ENCODE measurements at regions of chr6 and their contacts with region 1.

Region 1: GRCh38 chr6:99241905-99242534 is 107.5 kb downstream of the FAXC start:
- DNase-seq: peak in 1 of 2 experiments; percentile 61
- H3K4me3 ChIP-seq: no peak overlapping the region
- H3K27ac ChIP-seq: no peak overlapping the region
- H3K4me1 ChIP-seq: no peaks in the 10 kb centered on the region
- H3K27me3 ChIP-seq: no peaks in the 10 kb centered on the region
- CTCF ChIP-seq: peak in 2 of 3 experiments; percentile 56 to 69; a peak in 2 of 4 replicates
- EP300 ChIP-seq: no peak
- POLR2A ChIP-seq: no peak
- RAD21 ChIP-seq: peak; percentile 83 to 86

Region 2: DNA sequence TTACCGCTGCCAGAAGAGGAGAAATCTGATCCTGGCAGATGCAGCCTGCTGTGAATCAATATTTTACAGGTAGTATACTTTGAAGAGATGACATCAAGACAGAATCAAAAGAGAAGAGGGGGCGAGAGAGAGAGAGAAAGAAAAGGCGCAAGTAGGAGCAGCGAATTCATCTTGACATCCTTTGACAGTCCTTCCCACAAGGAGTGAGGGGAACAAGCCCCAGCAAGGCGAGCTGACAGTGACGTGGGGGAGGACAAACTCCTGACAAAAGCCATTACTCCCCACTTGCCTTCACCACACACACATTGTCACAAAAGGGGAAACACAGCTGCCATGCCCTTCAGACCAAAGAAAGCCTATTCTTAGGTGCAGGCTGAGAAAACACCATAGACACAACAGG is 148.2 kb before region 1 on chr6:
- CTCF ChIA-PET with region 1: interaction called, 10 read pairs
- POLR2A ChIA-PET with region 1: no interaction called
- DNase-seq: no peak
- H3K4me3 ChIP-seq: no peak overlapping the region
- H3K27ac ChIP-seq: no peak overlapping the region
- H3K4me1 ChIP-seq: no peaks in the 10 kb centered on the region
- H3K27me3 ChIP-seq: no peaks in the 10 kb centered on the region
- CTCF ChIP-seq: no peak
- EP300 ChIP-seq: no peak
- POLR2A ChIP-seq: no peak
- RAD21 ChIP-seq: no peak

Region 3: DNA sequence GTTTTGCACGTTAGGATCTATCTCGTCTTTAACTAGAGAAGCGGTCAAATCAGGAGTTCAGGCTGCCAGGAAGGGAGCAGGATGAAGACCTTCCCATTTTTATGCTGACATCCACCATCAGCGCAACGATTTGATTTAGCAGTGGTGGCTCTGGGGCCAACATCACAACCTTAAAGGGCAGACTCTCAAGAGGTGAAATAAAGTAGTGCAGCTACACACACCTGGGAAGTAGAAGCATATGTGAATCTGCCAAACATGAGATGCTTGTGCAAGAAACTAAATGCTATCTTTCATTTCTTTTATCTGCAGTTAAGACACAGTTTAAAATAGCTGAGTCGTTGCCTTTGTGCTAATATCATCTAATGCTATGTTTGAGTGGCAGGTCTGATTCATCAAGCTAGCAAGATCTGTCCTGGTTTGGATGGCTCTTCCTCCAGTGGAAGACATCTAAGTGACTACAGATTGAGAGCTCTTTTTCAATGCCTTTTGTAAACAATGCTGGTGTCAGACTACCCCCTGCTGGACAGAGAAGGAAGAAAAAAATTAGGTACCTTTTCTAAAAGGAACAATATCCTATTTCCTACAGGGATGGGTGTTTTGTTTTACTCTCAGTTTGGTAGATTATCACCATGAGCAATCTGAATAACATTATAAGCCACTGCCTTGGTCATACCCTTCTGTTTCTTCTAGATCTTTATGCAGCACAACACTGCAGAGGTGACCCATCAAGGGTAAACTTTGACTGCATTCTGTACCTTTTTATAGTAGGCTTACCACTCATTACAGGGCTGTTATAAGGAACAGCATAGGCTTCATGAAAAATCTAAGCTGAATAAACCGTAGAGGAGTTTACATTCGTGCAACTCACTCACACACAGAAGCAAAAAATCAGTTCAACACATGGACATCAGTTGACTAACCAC is 122.7 kb before region 1 on chr6:
- CTCF ChIA-PET with region 1: interaction called, 17 read pairs
- POLR2A ChIA-PET with region 1: no interaction called
- DNase-seq: no peak
- H3K4me3 ChIP-seq: no peak overlapping the region
- H3K27ac ChIP-seq: no peak overlapping the region
- H3K4me1 ChIP-seq: no peaks in the 10 kb centered on the region
- H3K27me3 ChIP-seq: no peaks in the 10 kb centered on the region
- CTCF ChIP-seq: peak in 2 of 3 experiments; percentile 59 to 61; a peak in 2 of 4 replicates
- EP300 ChIP-seq: no peak
- POLR2A ChIP-seq: no peak
- RAD21 ChIP-seq: peak; percentile 89 to 91

Region 4: GRCh38 chr6:99151634-99152344 is 90.2 kb before region 1 on chr6:
- CTCF ChIA-PET with region 1: interaction called, 167 read pairs
- POLR2A ChIA-PET with region 1: interaction called, 5 read pairs
- DNase-seq: peak; percentile 33 to 89
- H3K4me3 ChIP-seq: no peak overlapping the region
- H3K27ac ChIP-seq: no peak overlapping the region
- H3K4me1 ChIP-seq: peaks cover 0 to 6% (median 0%) of the 10 kb centered on the region in 4 experiments; a peak in 1 of 7 replicates
- H3K27me3 ChIP-seq: no peaks in the 10 kb centered on the region
- CTCF ChIP-seq: peak; percentile 72 to 92 (median 82)
- EP300 ChIP-seq: no peak
- POLR2A ChIP-seq: no peak
- RAD21 ChIP-seq: peak; percentile 65 to 71

Region 5: DNA sequence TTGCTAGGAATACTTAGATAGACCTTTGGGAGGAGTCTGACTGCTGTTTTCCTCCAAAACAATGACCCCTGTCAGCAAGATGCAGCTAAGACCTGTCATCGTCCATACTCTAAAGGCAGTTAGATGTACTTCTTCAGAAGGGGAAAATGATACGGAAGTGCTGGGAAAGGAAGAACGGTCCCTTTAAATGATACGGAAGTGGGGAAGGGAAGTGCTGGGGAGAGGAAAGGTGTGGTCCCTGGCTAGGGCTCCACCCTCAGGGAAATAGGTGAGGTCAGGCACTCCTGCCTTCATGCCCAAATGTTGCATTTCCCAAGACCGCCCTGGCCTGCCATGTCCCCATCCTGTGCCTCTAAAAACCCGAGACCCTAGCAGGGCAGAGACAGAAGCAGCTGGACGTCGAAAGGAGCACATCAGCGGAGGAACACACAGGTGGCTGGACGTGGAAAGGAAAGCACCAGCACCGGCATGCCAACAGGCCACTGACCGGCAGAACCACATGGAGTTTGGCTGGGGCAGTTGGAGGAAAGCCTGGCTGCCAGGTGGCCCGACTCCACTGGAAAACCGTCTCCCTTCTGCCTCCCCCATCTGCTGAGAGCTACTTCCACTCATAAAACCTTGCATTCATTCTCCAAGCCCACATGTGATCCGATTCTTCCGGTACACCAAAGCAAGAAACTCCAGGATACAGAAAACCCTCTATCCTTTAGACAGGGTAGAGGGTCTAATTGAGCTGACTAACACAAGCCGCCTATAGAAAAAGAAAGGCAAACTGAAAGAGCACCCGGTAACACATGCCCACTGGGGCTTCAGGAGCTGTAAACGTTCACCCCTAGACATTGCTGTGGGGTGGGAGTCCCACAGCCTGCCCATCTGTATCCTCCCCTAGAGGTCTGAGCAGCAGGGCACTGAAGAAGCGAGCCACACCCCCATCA is 12.9 kb after region 1 on chr6:
- CTCF ChIA-PET with region 1: interaction called, 18 read pairs
- POLR2A ChIA-PET with region 1: no interaction called
- DNase-seq: no peak
- H3K4me3 ChIP-seq: no peak overlapping the region
- H3K27ac ChIP-seq: no peak overlapping the region
- H3K4me1 ChIP-seq: no peaks in the 10 kb centered on the region
- H3K27me3 ChIP-seq: no peaks in the 10 kb centered on the region
- CTCF ChIP-seq: no peak
- EP300 ChIP-seq: no peak
- POLR2A ChIP-seq: no peak
- RAD21 ChIP-seq: no peak

Region 6: DNA sequence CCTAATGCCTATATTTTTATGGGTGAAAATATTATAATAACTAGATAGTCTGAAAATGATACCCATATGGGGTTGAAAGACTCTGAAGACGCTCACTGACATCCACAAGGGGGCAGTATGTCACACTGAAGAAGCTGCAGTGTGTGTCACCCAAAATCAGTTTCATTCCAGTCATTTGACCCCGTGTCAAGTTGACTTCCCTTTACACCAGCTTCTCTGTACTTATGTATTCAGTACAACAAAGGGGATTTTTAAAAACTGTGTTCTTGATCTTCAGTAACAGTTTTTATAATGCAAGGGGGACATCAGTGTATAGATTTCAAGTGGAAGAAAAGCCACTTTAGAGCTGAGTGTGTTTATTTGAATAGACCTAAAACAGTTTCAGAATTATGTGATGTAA is 88.1 kb after region 1 on chr6:
- CTCF ChIA-PET with region 1: no interaction called
- POLR2A ChIA-PET with region 1: no interaction called
- DNase-seq: no peak
- H3K4me3 ChIP-seq: no peak overlapping the region
- H3K27ac ChIP-seq: no peak overlapping the region
- H3K4me1 ChIP-seq: peaks cover 0 to 4% (median 1%) of the 10 kb centered on the region in 4 experiments; a peak in 3 of 7 replicates
- H3K27me3 ChIP-seq: no peaks in the 10 kb centered on the region
- CTCF ChIP-seq: peak; percentile 43 to 79 (median 63)
- EP300 ChIP-seq: no peak
- POLR2A ChIP-seq: no peak
- RAD21 ChIP-seq: peak; percentile 74 to 75

Region 7: DNA sequence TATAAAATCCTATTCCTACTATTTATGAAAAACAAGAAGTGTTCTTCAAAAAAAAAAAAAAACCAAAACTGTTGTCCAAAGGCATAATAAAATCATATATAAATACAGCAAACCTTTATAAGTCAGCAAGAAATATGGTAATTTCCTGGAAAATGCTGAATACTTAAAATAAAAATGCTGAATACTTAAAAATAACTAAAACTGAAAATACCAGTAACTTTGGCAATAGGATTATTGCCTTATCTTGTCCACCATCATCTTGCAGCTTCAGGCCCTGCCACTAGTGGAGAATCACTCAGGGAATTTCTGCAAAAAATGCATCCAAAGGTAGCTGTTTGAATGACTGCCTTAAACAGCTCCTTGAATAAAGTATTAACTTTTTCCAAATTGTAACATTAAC is 301.9 kb after region 1 on chr6:
- CTCF ChIA-PET with region 1: no interaction called
- POLR2A ChIA-PET with region 1: no interaction called
- DNase-seq: no peak
- H3K4me3 ChIP-seq: no peak overlapping the region
- H3K27ac ChIP-seq: no peak overlapping the region
- H3K4me1 ChIP-seq: no peaks in the 10 kb centered on the region
- H3K27me3 ChIP-seq: no peaks in the 10 kb centered on the region
- CTCF ChIP-seq: no peak
- EP300 ChIP-seq: no peak
- POLR2A ChIP-seq: no peak
- RAD21 ChIP-seq: no peak

Measured in H1 (cell line).